ENCODE measurements at regions of chr13 and their contacts with region 1.

Region 1: GRCh38 chr13:73058736-73059459 is at the start of gene KLF5:
- DNase-seq: peak; percentile 89
- ATAC-seq: peak; percentile 96
- H3K4me3 ChIP-seq: peak within 1 kb of the TSS; percentile 91
- H3K27ac ChIP-seq: peak within 1 kb of the TSS; percentile 70
- H3K4me1 ChIP-seq: peaks cover 5% of the 10 kb centered on the region
- H3K27me3 ChIP-seq: no peaks in the 10 kb centered on the region
- CTCF ChIP-seq: no peak; the same call in 1 of the 2 replicates
- POLR2A ChIP-seq: peak; percentile 80
- RAD21 ChIP-seq: no peak
- total RNA-seq, gene KLF5: 4.4 and 5.4 TPM in 2 replicates

Region 2: DNA sequence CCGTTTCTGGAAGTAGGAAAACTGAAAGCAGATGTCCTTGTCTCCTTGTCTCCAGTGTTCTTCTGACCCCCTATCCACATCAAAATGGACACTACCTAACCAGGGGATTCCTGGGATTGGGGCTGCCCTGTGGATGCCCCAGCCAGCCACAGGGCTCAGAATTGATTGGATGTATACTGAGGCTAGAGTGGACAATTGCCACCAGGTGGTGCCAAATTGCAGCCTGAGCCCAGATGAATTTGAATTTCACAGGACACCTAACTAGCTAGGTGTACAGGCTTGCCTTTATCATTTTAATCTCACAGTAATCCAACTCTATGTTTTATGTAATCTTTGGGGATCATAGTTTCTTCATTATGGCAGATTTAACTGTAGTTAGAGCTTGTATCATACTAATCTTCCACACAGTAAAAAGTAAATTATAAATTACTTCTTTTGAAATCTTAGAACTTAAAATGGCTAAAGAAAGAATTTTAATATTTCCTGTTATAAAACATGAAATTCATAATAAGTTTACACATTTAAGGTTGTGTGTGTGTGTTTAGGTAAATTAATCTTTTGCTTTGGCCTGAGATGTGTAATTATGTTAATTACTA is 219.0 kb before region 1 on chr13:
- CTCF ChIA-PET with region 1: no interaction called
- POLR2A ChIA-PET with region 1: no interaction called
- dilution Hi-C with region 1: no loop called
- in situ Hi-C with region 1: no loop called
- intact Hi-C with region 1: loop called (anchors 2 kb)
- DNase-seq: peak; percentile 42
- ATAC-seq: peak; percentile 87
- H3K4me3 ChIP-seq: no peak overlapping the region
- H3K27ac ChIP-seq: no peak overlapping the region
- H3K4me1 ChIP-seq: no peaks in the 10 kb centered on the region
- H3K27me3 ChIP-seq: no peaks in the 10 kb centered on the region
- CTCF ChIP-seq: peak; percentile 59
- POLR2A ChIP-seq: no peak
- RAD21 ChIP-seq: peak; percentile 79

Region 3: DNA sequence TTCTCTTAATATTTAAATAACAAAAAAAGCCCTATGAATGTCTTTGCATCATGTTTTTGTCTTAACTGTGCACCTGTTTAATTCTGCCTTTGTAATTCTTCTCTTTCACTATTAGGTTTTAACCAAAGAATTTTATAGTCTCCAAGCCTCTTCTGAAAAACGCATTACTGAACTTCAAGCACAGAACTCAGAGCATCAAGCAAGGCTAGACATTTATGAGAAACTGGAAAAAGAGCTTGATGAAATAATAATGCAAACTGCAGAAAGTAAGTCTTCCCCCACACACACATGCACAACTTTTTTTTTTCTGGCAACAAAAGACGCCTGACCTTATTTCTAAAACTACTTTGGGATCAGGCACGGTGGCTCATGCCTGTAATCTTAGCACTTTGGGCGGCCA is 150.5 kb before region 1 on chr13:
- CTCF ChIA-PET with region 1: no interaction called
- POLR2A ChIA-PET with region 1: no interaction called
- dilution Hi-C with region 1: no loop called
- in situ Hi-C with region 1: no loop called
- intact Hi-C with region 1: no loop called
- DNase-seq: no peak
- ATAC-seq: no peak
- H3K4me3 ChIP-seq: no peak overlapping the region
- H3K27ac ChIP-seq: no peak overlapping the region
- H3K4me1 ChIP-seq: no peaks in the 10 kb centered on the region
- H3K27me3 ChIP-seq: no peaks in the 10 kb centered on the region
- CTCF ChIP-seq: no peak
- POLR2A ChIP-seq: no peak
- RAD21 ChIP-seq: no peak

Region 4: DNA sequence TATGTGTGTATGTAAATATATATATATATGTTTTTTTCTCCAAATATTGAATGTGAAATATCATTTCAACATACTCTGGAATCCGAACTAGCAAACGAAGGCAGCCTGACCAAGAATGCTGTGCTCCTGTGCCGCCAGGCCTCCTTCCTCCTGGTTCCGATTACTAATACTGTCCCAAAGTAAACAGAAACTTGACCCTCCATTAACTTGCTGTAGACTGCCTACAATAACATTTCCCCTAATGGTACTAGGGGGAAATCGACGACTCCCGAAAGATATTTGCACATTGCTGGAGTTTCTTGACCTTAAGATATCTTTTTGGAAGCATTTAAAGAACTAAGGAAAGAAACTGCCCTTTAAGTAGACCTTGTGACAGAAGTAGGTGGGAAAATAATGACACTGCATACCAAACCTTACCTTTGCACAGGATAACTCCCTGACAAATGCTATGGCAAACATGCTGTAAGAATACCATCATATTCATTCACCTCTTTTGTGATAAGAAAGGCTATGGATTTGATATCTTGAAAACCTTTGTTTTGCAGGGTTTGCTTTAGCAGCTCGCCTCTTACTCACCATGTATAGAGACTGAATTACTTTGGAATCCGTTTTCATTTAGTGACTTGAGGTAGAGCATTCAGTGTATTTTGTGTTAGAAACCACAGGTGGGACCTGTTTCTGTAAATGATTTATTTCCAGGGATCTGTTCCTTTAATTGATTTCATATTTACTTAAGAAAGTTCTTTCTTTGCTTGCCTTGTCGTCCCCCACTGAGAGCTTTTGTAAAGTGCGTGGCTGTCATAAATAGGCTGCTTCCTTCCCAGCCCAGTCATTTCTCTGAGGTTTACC is 80.0 kb after region 1 on chr13:
- CTCF ChIA-PET with region 1: interaction called, 3 read pairs
- POLR2A ChIA-PET with region 1: no interaction called
- dilution Hi-C with region 1: no loop called
- in situ Hi-C with region 1: no loop called
- intact Hi-C with region 1: loop called (anchors 5 kb)
- DNase-seq: peak; percentile 76
- ATAC-seq: peak; percentile 91
- H3K4me3 ChIP-seq: no peak overlapping the region
- H3K27ac ChIP-seq: peak overlapping the region; percentile 70; the same call in 1 of the 2 replicates
- H3K4me1 ChIP-seq: peaks cover 14% of the 10 kb centered on the region
- H3K27me3 ChIP-seq: no peaks in the 10 kb centered on the region
- CTCF ChIP-seq: no peak
- POLR2A ChIP-seq: no peak
- RAD21 ChIP-seq: no peak

Region 5: DNA sequence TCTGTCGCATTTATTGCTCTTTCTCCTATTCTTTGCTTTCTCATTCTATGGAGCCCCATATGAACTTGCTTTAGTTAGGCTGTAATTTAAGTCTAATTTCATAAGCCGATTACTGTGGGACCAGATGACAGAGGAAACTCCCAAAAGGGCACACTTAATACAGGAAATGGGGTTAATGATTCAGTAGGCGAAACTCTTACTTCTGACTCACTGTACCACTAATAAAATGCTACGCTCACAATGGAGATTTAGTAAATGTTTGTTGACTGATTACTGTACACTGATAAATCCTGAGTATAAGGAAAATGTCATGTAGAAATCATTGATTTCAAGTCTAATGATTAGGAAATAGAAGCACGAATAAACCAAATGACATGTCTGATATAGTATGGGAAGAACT is 276.3 kb after region 1 on chr13:
- CTCF ChIA-PET with region 1: no interaction called
- POLR2A ChIA-PET with region 1: no interaction called
- dilution Hi-C with region 1: no loop called
- in situ Hi-C with region 1: no loop called
- intact Hi-C with region 1: loop called (anchors 10 kb)
- DNase-seq: peak; percentile 65
- ATAC-seq: no peak; the same call in 1 of the 2 replicates
- H3K4me3 ChIP-seq: no peak overlapping the region
- H3K27ac ChIP-seq: no peak overlapping the region
- H3K4me1 ChIP-seq: no peaks in the 10 kb centered on the region
- H3K27me3 ChIP-seq: no peaks in the 10 kb centered on the region
- CTCF ChIP-seq: no peak
- POLR2A ChIP-seq: no peak
- RAD21 ChIP-seq: no peak

Region 6: GRCh38 chr13:73417015-73417623 is 358.2 kb after region 1 on chr13:
- CTCF ChIA-PET with region 1: no interaction called
- POLR2A ChIA-PET with region 1: no interaction called
- dilution Hi-C with region 1: no loop called
- in situ Hi-C with region 1: no loop called
- intact Hi-C with region 1: loop called (anchors 2 kb)
- DNase-seq: no peak
- ATAC-seq: no peak; the same call in 1 of the 2 replicates
- H3K4me3 ChIP-seq: no peak overlapping the region
- H3K27ac ChIP-seq: no peak overlapping the region
- H3K4me1 ChIP-seq: no peaks in the 10 kb centered on the region
- H3K27me3 ChIP-seq: no peaks in the 10 kb centered on the region
- CTCF ChIP-seq: 0 out of 2 replicates have a peak, but pooled peaks have one; percentile 18
- POLR2A ChIP-seq: no peak
- RAD21 ChIP-seq: peak; percentile 36

Region 7: DNA sequence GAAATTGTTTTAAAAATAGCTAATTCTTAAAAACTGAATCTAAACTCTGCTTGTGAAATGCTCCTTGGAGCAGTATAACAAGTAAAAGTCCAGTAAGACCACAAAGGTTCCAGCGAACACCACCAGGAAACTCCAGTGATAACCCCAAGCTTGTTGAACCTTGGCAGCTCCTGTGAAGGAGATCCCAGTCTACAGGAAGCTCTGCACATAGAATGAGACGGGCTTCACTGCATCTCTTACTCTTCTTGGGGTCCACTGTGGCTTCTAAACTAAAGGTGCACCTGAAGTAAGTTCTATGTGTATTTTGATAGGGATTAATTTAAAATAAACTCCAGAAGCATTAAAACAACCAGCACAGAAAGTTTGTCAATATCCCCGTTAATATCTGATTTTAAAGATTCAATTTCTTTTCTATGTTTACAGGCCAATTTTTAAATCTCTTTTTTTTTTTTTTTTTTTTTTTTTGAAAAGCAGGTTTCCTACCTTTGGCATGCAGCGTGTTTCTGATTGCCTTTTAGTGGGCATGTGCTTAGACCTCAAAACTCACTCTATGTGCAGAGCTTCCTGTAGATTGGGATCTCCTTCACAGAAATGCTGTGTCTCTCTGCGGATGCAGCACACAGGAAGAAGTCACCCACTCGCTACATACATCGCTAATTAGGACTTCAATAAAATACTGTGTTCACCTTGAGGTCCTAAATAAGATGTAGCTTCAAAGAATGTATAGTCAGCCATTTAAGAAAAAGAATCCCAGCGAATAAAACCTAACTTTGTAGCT is 566.9 kb after region 1 on chr13:
- CTCF ChIA-PET with region 1: no interaction called
- POLR2A ChIA-PET with region 1: no interaction called
- dilution Hi-C with region 1: no loop called
- in situ Hi-C with region 1: no loop called
- intact Hi-C with region 1: no loop called
- DNase-seq: no peak
- ATAC-seq: no peak
- H3K4me3 ChIP-seq: no peak overlapping the region
- H3K27ac ChIP-seq: no peak overlapping the region
- H3K4me1 ChIP-seq: no peaks in the 10 kb centered on the region
- H3K27me3 ChIP-seq: peaks cover 4% of the 10 kb centered on the region; the same call in 1 of the 2 replicates
- CTCF ChIP-seq: no peak
- POLR2A ChIP-seq: no peak
- RAD21 ChIP-seq: no peak

Measured in IMR-90 (cell line).